ENCODE measurements at regions of chr2 and their contacts with region 1.

Region 1: GRCh38 chr2:58010599-58010998 is 36.0 kb upstream of the VRK2 start:
- DNase-seq: peak; percentile 50
- H3K4me3 ChIP-seq: no peak overlapping the region
- H3K27ac ChIP-seq: no peak overlapping the region
- H3K4me1 ChIP-seq: peaks cover 6% of the 10 kb centered on the region
- H3K27me3 ChIP-seq: no peaks in the 10 kb centered on the region
- CTCF ChIP-seq: no peak
- POLR2A ChIP-seq: no peak

Region 2: GRCh38 chr2:58039170-58039611 is 28.6 kb after region 1 on chr2:
- CTCF ChIA-PET with region 1: no interaction called
- POLR2A ChIA-PET with region 1: no interaction called
- dilution Hi-C with region 1: no loop called
- intact Hi-C with region 1: loop called (anchors 2 kb)
- DNase-seq: peak; percentile 82
- H3K4me3 ChIP-seq: peak overlapping the region in 2 of 3 experiments; percentile 47 to 49
- H3K27ac ChIP-seq: peak overlapping the region; percentile 82
- H3K4me1 ChIP-seq: peaks cover 37% of the 10 kb centered on the region
- H3K27me3 ChIP-seq: no peaks in the 10 kb centered on the region
- CTCF ChIP-seq: no peak
- POLR2A ChIP-seq: no peak

Region 3: GRCh38 chr2:58052973-58053372 is 42.4 kb after region 1 on chr2:
- CTCF ChIA-PET with region 1: no interaction called
- POLR2A ChIA-PET with region 1: no interaction called
- dilution Hi-C with region 1: no loop called
- intact Hi-C with region 1: no loop called
- DNase-seq: no peak
- H3K4me3 ChIP-seq: no peak overlapping the region
- H3K27ac ChIP-seq: no peak overlapping the region
- H3K4me1 ChIP-seq: peaks cover 7% of the 10 kb centered on the region
- H3K27me3 ChIP-seq: no peaks in the 10 kb centered on the region
- CTCF ChIP-seq: no peak
- POLR2A ChIP-seq: no peak

Region 4: GRCh38 chr2:59789505-59789904 is 1778.9 kb after region 1 on chr2:
- CTCF ChIA-PET with region 1: no interaction called
- POLR2A ChIA-PET with region 1: no interaction called
- dilution Hi-C with region 1: no loop called
- intact Hi-C with region 1: no loop called
- DNase-seq: no peak
- H3K4me3 ChIP-seq: no peak overlapping the region
- H3K27ac ChIP-seq: no peak overlapping the region
- H3K4me1 ChIP-seq: no peaks in the 10 kb centered on the region
- H3K27me3 ChIP-seq: no peaks in the 10 kb centered on the region
- CTCF ChIP-seq: no peak
- POLR2A ChIP-seq: no peak

Measured in endothelial cell of umbilical vein (primary cell).